H1 (cell line): ENCODE measurements at regions of chr10 and their contacts with region 1.

Region 1: GRCh38 chr10:78972947-78973900 is 95.5 kb upstream of the ZMIZ1 start:
- DNase-seq: peak; percentile 50 to 72
- H3K4me3 ChIP-seq: peak overlapping the region; percentile 28 to 66 (median 40); a peak in 7 of 8 replicates
- H3K27ac ChIP-seq: no peak overlapping the region
- H3K4me1 ChIP-seq: peaks cover 3 to 27% (median 19%) of the 10 kb centered on the region in 4 experiments
- H3K27me3 ChIP-seq: peaks cover 0 to 6% (median 0%) of the 10 kb centered on the region in 4 experiments; a peak in 3 of 7 replicates
- CTCF ChIP-seq: no peak
- EP300 ChIP-seq: no peak
- POLR2A ChIP-seq: no peak; a peak in 1 of 3 replicates
- RAD21 ChIP-seq: no peak

Region 2: GRCh38 chr10:78787125-78787524 is 186.1 kb before region 1 on chr10:
- CTCF ChIA-PET with region 1: no interaction called
- POLR2A ChIA-PET with region 1: no interaction called
- DNase-seq: no peak
- H3K4me3 ChIP-seq: no peak overlapping the region
- H3K27ac ChIP-seq: no peak overlapping the region
- H3K4me1 ChIP-seq: no peaks in the 10 kb centered on the region
- H3K27me3 ChIP-seq: no peaks in the 10 kb centered on the region
- CTCF ChIP-seq: no peak
- EP300 ChIP-seq: no peak
- POLR2A ChIP-seq: no peak
- RAD21 ChIP-seq: no peak

Region 3: DNA sequence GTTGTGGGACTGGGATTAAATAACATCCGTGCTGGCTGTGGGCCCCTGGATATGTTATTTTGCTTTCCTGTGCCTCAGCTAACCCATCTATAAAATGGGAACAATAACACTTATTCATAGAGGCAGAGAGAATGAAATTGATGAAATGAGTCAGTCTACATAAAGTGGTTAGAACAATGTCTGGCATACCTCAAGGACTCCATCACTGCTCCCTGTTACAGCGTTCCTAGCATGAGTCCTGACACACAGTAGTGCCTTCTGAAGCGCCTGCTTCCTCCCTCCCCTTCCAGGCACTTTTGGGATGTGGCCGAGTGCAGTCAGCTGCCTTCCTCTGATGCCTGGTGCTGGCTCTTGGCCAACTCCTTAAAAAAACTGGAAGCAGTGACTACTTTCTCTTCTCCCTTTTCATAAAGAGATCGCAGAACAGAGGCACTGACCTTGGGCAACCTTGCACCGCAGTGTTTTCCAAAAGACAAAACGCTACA is 12.9 kb before region 1 on chr10:
- CTCF ChIA-PET with region 1: interaction called, 19 read pairs
- POLR2A ChIA-PET with region 1: interaction called, 13 read pairs
- DNase-seq: no peak
- H3K4me3 ChIP-seq: no peak overlapping the region
- H3K27ac ChIP-seq: no peak overlapping the region
- H3K4me1 ChIP-seq: peaks cover 6 to 21% (median 14%) of the 10 kb centered on the region in 4 experiments
- H3K27me3 ChIP-seq: no peaks in the 10 kb centered on the region; a peak in 3 of 7 replicates
- CTCF ChIP-seq: no peak
- EP300 ChIP-seq: no peak
- POLR2A ChIP-seq: no peak
- RAD21 ChIP-seq: no peak

Region 4: GRCh38 chr10:78991187-78991586 is 18.0 kb after region 1 on chr10:
- CTCF ChIA-PET with region 1: interaction called, 20 read pairs
- POLR2A ChIA-PET with region 1: interaction called, 9 read pairs
- DNase-seq: no peak
- H3K4me3 ChIP-seq: no peak overlapping the region
- H3K27ac ChIP-seq: no peak overlapping the region
- H3K4me1 ChIP-seq: peaks cover 0 to 6% (median 2%) of the 10 kb centered on the region in 4 experiments; a peak in 4 of 7 replicates
- H3K27me3 ChIP-seq: no peaks in the 10 kb centered on the region
- CTCF ChIP-seq: no peak
- EP300 ChIP-seq: no peak
- POLR2A ChIP-seq: no peak
- RAD21 ChIP-seq: no peak

Region 5: GRCh38 chr10:79019911-79020491 is 46.8 kb after region 1 on chr10:
- CTCF ChIA-PET with region 1: no interaction called
- POLR2A ChIA-PET with region 1: no interaction called
- DNase-seq: no peak
- H3K4me3 ChIP-seq: no peak overlapping the region
- H3K27ac ChIP-seq: no peak overlapping the region
- H3K4me1 ChIP-seq: peaks cover 0 to 5% (median 2%) of the 10 kb centered on the region in 4 experiments; a peak in 3 of 7 replicates
- H3K27me3 ChIP-seq: no peaks in the 10 kb centered on the region; a peak in 1 of 7 replicates
- CTCF ChIP-seq: no peak
- EP300 ChIP-seq: no peak
- POLR2A ChIP-seq: no peak
- RAD21 ChIP-seq: no peak